Activated CD8-positive, alpha-beta T cell treated with anti-CD3 and anti-CD28 coated beads, Interleukin-2, amount 10 ng/mL, durations not matched to agents 7 days and 5 days (primary cell): ENCODE measurements at regions of chr14 and their contacts with region 1.

Region 1: DNA sequence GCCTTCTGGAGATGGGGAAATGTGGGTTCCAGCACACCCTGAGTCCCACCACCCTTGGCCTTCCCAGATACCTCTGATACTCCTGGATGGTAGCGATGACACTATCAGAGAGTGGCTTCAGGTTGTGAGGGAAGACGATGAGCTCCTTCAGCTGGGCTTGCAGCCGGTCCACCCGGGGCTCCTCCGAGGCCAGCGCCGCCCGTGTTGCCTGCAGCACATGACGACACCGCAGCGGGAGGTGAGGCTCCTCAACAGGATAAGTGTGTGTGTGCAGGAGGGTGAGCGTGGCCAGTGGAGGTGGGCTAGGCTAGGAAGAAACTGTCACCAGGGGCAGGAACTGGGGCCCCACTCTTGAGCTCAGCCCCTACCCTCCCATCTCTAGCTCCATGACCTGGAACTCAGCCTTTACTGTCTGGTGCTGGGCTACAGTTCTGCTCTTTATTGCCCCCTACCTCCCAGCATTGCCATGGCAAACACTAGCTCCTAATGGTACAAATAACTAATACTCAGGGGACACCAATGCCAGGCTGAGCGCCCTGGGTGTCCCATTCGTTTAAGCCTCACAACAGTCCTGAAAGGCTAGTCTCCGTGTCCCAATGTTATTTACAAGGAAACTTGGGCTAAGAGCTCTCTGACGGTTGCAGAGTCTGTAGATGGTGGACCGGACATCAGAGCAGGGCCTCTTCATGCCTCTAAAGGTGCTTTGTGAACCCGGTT is 64.1 kb downstream of the SYNE3 start:
- DNase-seq: peak; percentile 26
- ATAC-seq: peak; percentile 42
- H3K4me3 Mint-ChIP-seq: no peak overlapping the region
- H3K27ac Mint-ChIP-seq: no peak overlapping the region
- H3K4me1 Mint-ChIP-seq: no peaks in the 10 kb centered on the region
- H3K27me3 Mint-ChIP-seq: no peaks in the 10 kb centered on the region

Region 2: DNA sequence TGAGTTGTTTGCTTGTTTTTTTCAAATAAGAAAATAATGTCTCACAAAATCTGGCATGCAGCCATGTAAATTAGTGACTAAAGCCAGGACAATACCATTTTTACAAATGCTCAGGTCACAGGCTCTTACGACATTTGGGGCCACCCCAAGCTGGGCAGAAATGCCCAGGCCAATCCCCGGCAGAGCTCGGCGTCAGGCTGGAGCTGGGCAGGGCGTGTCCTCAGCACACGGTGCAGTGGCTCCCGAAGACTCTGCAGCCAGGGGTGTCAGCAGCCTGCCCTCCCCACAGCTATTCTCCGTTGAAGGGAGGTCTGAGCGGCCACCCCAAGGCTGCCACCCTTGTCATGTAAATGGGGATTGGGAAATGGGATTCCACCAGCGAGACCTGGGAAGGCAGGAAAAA is 453.7 kb before region 1 on chr14:
- CTCF ChIA-PET with region 1: no interaction called
- POLR2A ChIA-PET with region 1: no interaction called
- DNase-seq: no peak
- ATAC-seq: no peak
- H3K4me3 Mint-ChIP-seq: no peak overlapping the region
- H3K27ac Mint-ChIP-seq: no peak overlapping the region
- H3K4me1 Mint-ChIP-seq: no peaks in the 10 kb centered on the region
- H3K27me3 Mint-ChIP-seq: peaks cover 22% of the 10 kb centered on the region

Region 3: DNA sequence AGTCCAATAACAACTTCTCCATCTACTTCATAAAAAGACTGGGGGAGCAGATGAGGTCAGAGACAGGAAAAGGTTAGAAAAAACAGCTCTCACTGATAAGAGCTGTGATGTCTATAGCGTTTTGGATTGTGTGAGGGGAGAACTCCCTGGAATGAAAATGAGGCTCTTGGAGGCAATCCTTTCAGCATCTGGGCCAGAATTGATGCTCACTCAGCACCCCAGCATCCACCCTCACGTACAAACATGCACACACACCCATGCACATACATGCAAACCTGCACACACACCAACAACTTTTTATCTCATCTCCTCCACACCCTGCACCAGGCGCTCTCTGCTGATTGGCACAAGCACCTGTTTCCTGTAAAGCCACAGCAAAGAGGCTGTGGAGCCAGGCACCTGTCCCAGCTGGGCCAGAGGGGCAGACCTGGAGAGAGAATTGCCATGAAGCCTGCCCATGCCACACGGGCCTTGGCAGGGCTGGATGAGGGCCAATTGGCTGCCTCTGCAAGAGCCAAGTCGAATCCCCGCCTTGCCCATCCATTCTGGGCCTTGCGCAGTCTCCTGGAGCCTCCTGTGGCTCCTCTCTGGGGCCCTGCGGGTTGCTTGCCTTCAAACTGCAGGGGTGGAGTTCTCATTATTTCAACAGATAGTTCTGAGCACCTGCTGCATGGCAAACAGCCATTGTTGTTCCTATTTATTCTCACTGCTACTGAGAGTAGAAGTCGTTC is 11.0 kb after region 1 on chr14:
- CTCF ChIA-PET with region 1: interaction called, 16 read pairs
- POLR2A ChIA-PET with region 1: interaction called, 3 read pairs
- DNase-seq: peak; percentile 48
- ATAC-seq: peak; percentile 70
- H3K4me3 Mint-ChIP-seq: peak overlapping the region; percentile 18
- H3K27ac Mint-ChIP-seq: peak overlapping the region; percentile 89
- H3K4me1 Mint-ChIP-seq: peaks cover 49% of the 10 kb centered on the region
- H3K27me3 Mint-ChIP-seq: no peaks in the 10 kb centered on the region

Region 4: GRCh38 chr14:95534299-95535225 is 82.2 kb after region 1 on chr14 and contains the start of gene GLRX5:
- CTCF ChIA-PET with region 1: interaction called, 10 read pairs
- POLR2A ChIA-PET with region 1: interaction called, 3 read pairs
- DNase-seq: peak; percentile 99
- ATAC-seq: peak; percentile 91
- H3K4me3 Mint-ChIP-seq: peak within 1 kb of the TSS; percentile 91
- H3K27ac Mint-ChIP-seq: peak within 1 kb of the TSS; percentile 89
- H3K4me1 Mint-ChIP-seq: peaks cover 67% of the 10 kb centered on the region
- H3K27me3 Mint-ChIP-seq: no peaks in the 10 kb centered on the region
- total RNA-seq, gene GLRX5: 52.8 to 54.6 TPM

Region 5: GRCh38 chr14:95601650-95602049 is 149.3 kb after region 1 on chr14:
- CTCF ChIA-PET with region 1: no interaction called
- POLR2A ChIA-PET with region 1: no interaction called
- DNase-seq: no peak
- ATAC-seq: no peak
- H3K4me3 Mint-ChIP-seq: no peak overlapping the region
- H3K27ac Mint-ChIP-seq: no peak overlapping the region
- H3K4me1 Mint-ChIP-seq: no peaks in the 10 kb centered on the region
- H3K27me3 Mint-ChIP-seq: peaks cover 30% of the 10 kb centered on the region